ENCODE measurements at regions of chr6 and their contacts with region 1.

Region 1: DNA sequence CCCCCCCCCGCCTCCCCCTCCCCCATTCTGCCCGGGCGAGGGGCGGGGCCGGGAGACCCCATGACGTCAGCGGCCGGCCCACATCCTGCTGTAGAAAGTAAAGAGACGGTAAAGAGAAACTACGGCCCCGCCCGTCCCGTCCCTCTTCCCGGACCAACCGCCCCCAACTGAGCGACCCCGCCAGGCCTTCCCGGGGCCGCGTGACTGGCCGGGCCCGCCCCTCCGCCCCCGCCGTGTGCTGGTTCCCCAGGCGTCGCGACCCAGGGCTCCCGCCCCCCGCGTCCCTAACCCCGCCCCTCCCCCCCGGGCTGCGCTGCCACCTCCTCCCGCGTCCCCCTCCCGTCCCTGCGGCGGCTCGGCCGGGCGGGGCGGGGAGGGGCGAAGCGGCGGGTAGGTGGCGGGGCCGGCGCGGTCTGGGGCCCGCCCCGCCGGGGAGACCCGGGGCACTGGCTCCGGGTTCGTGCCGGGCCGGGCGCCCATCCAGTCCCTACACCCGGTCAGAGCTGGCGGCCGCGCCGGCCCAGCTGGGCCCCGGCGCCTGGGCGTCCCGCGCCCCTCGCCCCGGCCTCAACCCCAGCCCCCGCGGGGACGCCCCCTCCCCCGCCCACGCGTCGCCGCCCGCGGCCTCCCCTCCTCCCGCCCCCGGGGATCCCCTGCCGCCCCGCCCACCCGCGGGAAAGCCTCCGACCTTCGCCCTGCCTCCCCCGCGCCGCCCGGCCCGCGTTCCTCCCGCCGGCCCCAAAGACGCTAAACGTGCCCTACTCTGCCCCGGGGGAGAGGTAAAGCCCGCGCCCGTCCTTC is 636 bp upstream of the HIVEP1 start:
- DNase-seq: peak; percentile 92
- ATAC-seq: peak; percentile 72
- H3K4me3 Mint-ChIP-seq: peak overlapping the region; percentile 92
- H3K27ac Mint-ChIP-seq: peak overlapping the region; percentile 95
- H3K4me1 Mint-ChIP-seq: peaks cover 50% of the 10 kb centered on the region
- H3K27me3 Mint-ChIP-seq: no peaks in the 10 kb centered on the region
- CTCF ChIP-seq: no peak

Region 2: GRCh38 chr6:11381801-11382513 is 629.5 kb before region 1 on chr6:
- CTCF ChIA-PET with region 1: no interaction called
- POLR2A ChIA-PET with region 1: no interaction called
- intact Hi-C with region 1: loop called (anchors 5 kb)
- DNase-seq: peak; percentile 58
- ATAC-seq: peak; percentile 89
- H3K4me3 Mint-ChIP-seq: peak overlapping the region; percentile 91
- H3K27ac Mint-ChIP-seq: peak overlapping the region; percentile 93
- H3K4me1 Mint-ChIP-seq: peaks cover 84% of the 10 kb centered on the region
- H3K27me3 Mint-ChIP-seq: no peaks in the 10 kb centered on the region
- CTCF ChIP-seq: no peak

Region 3: DNA sequence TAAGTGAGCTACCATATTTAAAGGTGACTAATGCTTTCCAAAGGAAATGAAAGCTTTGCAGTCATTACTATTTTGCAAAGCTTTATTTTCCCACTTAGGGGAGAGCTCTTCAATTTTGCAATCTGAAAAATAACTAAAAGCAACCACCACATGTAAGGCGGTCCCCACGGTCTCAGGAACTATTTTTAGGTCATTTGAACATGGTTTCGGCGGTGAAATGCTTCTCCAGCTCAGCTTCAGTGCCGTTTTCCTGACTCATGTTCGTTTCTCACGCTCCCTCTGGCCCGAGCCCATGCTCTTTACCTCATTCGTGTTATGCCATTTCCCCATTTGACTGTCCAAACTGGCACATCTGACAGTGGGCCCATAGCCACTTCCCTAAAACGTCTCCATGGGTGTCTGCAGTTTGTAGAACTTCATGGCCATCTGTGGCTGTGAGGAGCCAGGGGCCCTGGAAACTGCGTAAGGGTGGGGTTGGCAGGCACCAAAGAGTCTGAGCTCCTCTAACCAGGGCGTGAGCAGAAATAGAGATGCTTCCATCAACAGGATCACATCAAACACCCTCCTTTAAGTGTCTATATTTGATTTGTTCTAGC is 279.3 kb before region 1 on chr6:
- CTCF ChIA-PET with region 1: no interaction called
- POLR2A ChIA-PET with region 1: interaction called, 3 read pairs
- intact Hi-C with region 1: loop called (anchors 1 kb)
- DNase-seq: peak; percentile 19
- ATAC-seq: peak; percentile 82
- H3K4me3 Mint-ChIP-seq: no peak overlapping the region
- H3K27ac Mint-ChIP-seq: peak overlapping the region; percentile 64
- H3K4me1 Mint-ChIP-seq: peaks cover 23% of the 10 kb centered on the region
- H3K27me3 Mint-ChIP-seq: peaks cover 17% of the 10 kb centered on the region
- CTCF ChIP-seq: no peak

Region 4: DNA sequence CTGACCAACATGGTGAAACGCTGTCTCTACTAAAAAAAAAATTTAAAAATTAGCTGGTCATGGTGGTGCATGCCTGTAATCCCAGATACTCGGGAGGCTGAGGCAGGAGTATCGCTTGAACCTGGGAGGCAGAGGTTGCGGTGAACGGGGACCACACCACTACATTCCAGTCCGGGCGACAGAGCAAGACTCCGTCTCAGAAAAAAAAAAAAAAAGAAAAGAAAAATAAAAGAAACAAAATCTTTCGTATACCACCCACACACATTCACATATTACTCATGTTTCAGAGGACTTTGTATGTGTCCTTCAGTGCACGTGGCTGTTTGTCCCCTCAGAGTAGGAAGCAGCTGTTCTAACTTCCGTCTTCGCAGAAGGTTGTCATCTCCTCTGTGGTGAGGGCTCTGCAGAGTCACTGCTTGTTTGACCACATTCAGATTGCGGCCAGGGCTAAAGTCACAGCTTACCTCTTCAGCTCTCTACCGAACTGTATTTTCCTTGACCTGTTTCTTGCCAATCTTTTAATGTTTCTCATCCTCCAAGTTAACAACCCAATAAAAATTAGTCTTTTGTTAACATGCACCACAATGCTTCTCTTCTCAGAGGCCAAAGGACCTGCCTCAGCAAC is 36.0 kb before region 1 on chr6:
- CTCF ChIA-PET with region 1: no interaction called
- POLR2A ChIA-PET with region 1: interaction called, 6 read pairs
- intact Hi-C with region 1: loop called (anchors 1 kb)
- DNase-seq: no peak
- ATAC-seq: peak; percentile 94
- H3K4me3 Mint-ChIP-seq: peak overlapping the region; percentile 44
- H3K27ac Mint-ChIP-seq: peak overlapping the region; percentile 74
- H3K4me1 Mint-ChIP-seq: peaks cover 29% of the 10 kb centered on the region
- H3K27me3 Mint-ChIP-seq: peaks cover 2% of the 10 kb centered on the region
- CTCF ChIP-seq: no peak

Region 5: GRCh38 chr6:12051861-12052368 is 40.4 kb after region 1 on chr6:
- CTCF ChIA-PET with region 1: interaction called, 9 read pairs
- POLR2A ChIA-PET with region 1: interaction called, 84 read pairs
- intact Hi-C with region 1: loop called (anchors 1 kb)
- DNase-seq: no peak
- ATAC-seq: peak; percentile 79
- H3K4me3 Mint-ChIP-seq: peak overlapping the region; percentile 81
- H3K27ac Mint-ChIP-seq: peak overlapping the region; percentile 97
- H3K4me1 Mint-ChIP-seq: peaks cover 78% of the 10 kb centered on the region
- H3K27me3 Mint-ChIP-seq: no peaks in the 10 kb centered on the region
- CTCF ChIP-seq: no peak

Region 6: DNA sequence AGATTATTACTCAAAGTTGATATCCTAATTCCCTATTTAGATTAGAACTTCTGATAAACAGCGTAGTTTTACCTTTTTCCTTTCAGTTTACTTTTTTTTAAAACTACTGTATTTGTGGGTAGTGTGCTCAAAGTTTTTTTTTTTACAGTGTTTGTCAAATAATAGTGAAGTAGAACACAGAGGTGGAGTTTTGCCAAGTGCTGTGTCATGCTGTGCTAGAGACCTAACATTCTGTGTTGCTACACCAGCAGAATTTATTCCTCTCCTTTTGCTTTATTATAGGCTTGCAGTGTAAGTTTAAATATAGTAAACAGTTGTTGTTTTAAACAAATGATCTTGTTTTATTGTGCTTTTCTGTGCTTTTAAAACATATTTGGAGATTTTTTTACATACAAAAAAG is 126.0 kb after region 1 on chr6:
- CTCF ChIA-PET with region 1: no interaction called
- POLR2A ChIA-PET with region 1: no interaction called
- intact Hi-C with region 1: no loop called
- DNase-seq: no peak
- ATAC-seq: no peak
- H3K4me3 Mint-ChIP-seq: no peak overlapping the region
- H3K27ac Mint-ChIP-seq: no peak overlapping the region
- H3K4me1 Mint-ChIP-seq: peaks cover 4% of the 10 kb centered on the region
- H3K27me3 Mint-ChIP-seq: no peaks in the 10 kb centered on the region
- CTCF ChIP-seq: no peak

Region 7: GRCh38 chr6:12233693-12234571 is 222.5 kb after region 1 on chr6:
- CTCF ChIA-PET with region 1: interaction called, 3 read pairs
- POLR2A ChIA-PET with region 1: interaction called, 6 read pairs
- intact Hi-C with region 1: loop called (anchors 2 kb)
- DNase-seq: peak; percentile 15
- ATAC-seq: peak; percentile 62
- H3K4me3 Mint-ChIP-seq: no peak overlapping the region
- H3K27ac Mint-ChIP-seq: no peak overlapping the region
- H3K4me1 Mint-ChIP-seq: peaks cover 14% of the 10 kb centered on the region
- H3K27me3 Mint-ChIP-seq: no peaks in the 10 kb centered on the region
- CTCF ChIP-seq: no peak

Measured in activated B cell treated with CpG ODN at 0.5 μM for 24 hours (primary cell).